Activated CD8-positive, alpha-beta memory T cell treated with anti-CD3 and anti-CD28 coated beads, Interleukin-2, amount 10 ng/mL, durations not matched to agents 7 days and 5 days (primary cell): ENCODE measurements at regions of chr15 and their contacts with region 1.

Region 1: GRCh38 chr15:90931737-90932659 is at the start of gene HDDC3:
- DNase-seq: peak; percentile 95
- ATAC-seq: peak; percentile 52
- H3K4me3 Mint-ChIP-seq: peak within 1 kb of the TSS; percentile 99
- H3K27ac Mint-ChIP-seq: peak within 1 kb of the TSS; percentile 100
- H3K4me1 Mint-ChIP-seq: peaks cover 61% of the 10 kb centered on the region
- H3K27me3 Mint-ChIP-seq: no peaks in the 10 kb centered on the region
- total RNA-seq, gene HDDC3: 33.2 to 39.3 TPM

Region 2: GRCh38 chr15:90648137-90649070 is 283.6 kb before region 1 on chr15:
- CTCF ChIA-PET with region 1: interaction called, 36 read pairs
- DNase-seq: peak; percentile 95
- ATAC-seq: peak; percentile 84
- H3K4me3 Mint-ChIP-seq: peak overlapping the region; percentile 46
- H3K27ac Mint-ChIP-seq: peak overlapping the region; percentile 94
- H3K4me1 Mint-ChIP-seq: peaks cover 35% of the 10 kb centered on the region
- H3K27me3 Mint-ChIP-seq: no peaks in the 10 kb centered on the region

Region 3: DNA sequence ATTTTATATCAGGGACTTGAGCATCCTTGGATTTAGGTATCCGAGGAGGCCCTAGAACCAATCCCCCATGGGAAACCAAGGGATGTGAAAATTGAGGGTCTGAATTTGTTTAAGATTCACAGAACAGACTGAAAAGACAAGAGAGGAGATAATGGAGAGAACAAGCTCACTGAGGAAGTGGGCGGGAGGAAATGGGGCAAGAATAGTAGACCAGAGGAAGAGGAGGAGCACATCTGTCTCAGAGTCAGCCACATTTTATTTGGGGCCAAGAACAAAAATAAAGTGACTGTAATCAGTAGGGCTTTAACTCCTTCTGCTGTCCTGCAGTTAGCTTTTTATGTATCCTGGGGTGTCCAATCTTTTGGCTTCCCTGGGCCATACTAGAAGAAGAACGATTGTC is 151.1 kb before region 1 on chr15:
- CTCF ChIA-PET with region 1: interaction called, 19 read pairs
- DNase-seq: peak; percentile 68
- ATAC-seq: peak; percentile 94
- H3K4me3 Mint-ChIP-seq: peak overlapping the region; percentile 31
- H3K27ac Mint-ChIP-seq: peak overlapping the region; percentile 84
- H3K4me1 Mint-ChIP-seq: peaks cover 35% of the 10 kb centered on the region
- H3K27me3 Mint-ChIP-seq: no peaks in the 10 kb centered on the region

Region 4: DNA sequence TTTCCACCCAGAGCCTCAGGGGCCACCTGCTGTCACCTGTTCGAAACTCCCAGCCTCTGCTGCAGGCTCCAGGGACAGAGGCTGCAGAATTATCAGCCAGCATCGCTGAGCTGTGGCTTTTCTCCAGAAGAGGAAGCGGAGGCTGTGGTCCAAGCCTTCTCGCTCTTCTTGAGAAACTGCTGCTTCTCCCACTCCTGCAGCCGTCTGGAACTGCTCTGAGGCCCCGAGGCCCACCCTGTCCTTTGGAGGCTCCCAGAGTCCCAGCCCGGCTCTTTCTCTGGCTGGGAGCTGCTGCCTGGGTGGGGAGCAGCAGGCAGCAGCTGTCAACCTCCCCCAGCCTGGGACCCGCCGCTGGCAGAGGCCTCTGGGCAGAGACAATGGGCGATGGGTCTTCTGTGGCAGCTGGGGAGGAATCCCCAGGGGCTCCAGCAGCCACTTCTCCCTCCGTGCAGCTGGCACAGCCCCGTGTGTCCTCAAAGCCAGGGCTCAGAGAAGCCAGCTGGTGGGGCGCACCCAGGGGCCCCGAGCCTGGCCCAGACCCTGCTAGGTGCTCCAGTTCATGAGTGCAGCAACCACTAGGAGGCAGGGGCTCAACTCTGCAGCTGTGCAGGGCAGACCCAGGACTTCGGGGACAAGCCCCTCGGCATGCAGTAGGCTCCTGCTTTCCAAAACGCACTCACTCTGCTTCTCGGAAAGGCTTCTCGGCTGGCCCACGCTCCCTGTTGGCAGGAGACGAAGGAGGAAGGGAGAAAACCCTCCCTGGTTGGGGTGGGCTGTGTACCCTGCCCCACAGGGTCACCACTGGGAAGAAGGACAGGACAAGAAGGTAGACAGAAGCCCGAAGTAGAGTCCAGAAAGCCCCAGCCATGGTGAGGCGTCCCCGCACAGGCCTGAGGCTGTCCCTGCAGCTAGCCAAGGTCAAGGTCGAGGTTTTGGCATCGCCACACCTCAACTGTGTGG is 113.5 kb before region 1 on chr15:
- CTCF ChIA-PET with region 1: interaction called, 22 read pairs
- DNase-seq: peak; percentile 65
- ATAC-seq: peak; percentile 23
- H3K4me3 Mint-ChIP-seq: peak overlapping the region; percentile 8
- H3K27ac Mint-ChIP-seq: peak overlapping the region; percentile 96
- H3K4me1 Mint-ChIP-seq: peaks cover 83% of the 10 kb centered on the region
- H3K27me3 Mint-ChIP-seq: no peaks in the 10 kb centered on the region

Region 5: DNA sequence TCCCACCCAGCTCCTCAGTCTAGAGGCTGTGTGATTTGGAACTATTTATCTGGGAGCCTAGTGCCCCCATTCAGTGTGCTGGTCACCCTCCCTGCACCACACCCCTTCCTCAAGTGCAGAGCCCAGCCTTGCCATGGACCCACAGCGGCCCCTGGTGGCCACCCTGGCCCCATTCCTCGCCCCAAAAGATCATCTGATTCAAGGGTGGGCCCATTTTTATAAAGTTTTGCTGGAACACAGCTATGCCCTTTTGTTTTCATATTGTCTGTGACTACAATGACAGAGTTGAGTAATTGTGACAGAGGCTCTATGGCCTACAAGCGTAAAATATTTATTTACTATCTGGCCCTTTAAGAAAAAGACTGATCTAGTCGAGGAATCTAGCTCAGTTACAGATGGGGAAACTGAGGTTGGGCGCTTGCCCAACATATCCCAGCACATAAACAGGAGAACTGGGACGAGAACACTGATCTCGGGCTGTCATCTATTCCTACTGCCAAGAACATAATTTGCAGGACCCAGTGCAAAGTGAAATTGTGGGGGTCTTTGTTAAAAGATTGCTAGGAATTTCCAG is 45.9 kb before region 1 on chr15:
- CTCF ChIA-PET with region 1: interaction called, 64 read pairs
- DNase-seq: peak; percentile 86
- ATAC-seq: peak; percentile 44
- H3K4me3 Mint-ChIP-seq: peak overlapping the region; percentile 62
- H3K27ac Mint-ChIP-seq: peak overlapping the region; percentile 73
- H3K4me1 Mint-ChIP-seq: peaks cover 71% of the 10 kb centered on the region
- H3K27me3 Mint-ChIP-seq: no peaks in the 10 kb centered on the region

Region 6: DNA sequence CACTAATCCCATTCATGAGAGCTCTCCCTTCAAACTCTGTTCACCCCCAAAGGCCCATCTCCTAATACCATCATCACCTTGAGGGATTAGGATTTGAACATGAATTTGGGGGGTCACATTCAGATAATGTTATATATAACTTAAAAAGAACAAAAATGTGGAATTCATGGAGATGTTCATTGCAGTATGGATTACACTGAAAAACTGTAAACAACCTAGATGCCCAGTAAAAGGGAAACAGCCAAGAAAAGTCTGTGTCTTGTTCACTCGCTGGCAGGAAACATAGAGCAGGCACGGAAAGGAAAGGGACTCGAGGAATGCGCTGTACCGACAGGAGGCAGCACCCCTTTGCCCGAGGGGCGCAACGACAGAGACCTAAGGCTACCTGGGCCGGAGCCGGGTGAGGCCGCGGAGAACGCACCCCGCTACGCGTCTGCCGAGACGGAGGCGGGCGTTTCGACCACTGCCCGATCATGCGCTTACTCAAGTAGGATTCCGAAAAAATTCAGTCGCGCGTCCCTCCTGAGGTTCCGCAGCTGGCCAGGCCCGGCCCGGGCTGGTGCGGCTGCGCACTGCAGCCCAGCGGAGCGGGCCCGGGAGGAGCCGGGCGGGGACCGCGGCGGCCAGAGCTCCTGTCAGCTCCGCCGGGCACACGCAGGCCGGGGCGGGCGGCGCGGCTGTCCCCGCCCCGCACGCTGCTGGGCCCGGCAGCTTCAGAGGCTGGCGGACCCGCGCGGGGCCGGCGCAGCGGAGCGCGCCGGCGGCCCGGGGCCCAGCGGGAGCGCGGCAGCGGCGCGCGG is 29.8 kb before region 1 on chr15:
- CTCF ChIA-PET with region 1: interaction called, 181 read pairs
- DNase-seq: peak; percentile 85
- ATAC-seq: peak; percentile 81
- H3K4me3 Mint-ChIP-seq: peak overlapping the region; percentile 87
- H3K27ac Mint-ChIP-seq: peak overlapping the region; percentile 91
- H3K4me1 Mint-ChIP-seq: peaks cover 39% of the 10 kb centered on the region
- H3K27me3 Mint-ChIP-seq: no peaks in the 10 kb centered on the region

Region 7: DNA sequence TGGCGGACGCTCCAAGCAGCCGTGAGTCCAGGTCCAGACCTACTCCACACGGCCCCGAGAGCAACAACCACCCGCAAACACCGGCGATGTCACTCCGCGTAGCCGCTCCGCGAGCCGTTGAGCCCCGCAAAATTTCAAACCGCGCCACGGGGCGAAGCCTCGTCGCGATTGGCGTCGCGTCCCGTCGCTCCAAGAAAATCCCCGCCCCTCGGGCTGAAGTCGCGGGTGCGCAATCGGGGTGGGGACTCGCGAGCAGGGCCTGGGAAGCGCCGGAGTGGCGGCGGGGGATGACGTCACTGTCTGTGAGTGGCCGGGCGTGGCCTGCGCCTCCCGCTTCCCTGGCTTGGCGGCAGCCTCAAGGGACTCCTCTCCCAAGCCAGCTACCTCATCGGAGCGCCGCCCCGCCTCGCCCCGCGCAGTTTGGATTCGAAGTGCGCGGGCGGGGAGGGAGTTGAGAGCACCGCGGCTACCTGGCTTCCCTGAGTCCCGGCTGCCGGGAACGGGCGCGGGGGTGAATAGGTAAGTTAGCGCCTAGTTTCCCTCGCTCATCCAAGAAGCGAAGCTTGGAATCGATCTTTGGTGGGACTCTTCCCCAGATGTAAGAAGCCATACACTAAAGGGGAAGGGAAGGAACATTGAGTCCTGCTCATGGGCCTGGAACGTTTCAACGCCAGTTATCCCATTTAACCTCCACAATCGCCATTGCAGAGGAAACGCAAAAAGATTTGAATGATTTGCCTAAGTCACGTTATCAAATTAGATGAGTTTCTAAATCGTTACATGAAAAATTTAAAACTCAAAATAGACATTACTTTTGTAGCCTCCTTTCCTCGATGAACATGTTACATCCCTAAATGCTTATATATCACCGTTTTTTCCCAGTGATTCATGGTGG is 62.7 kb after region 1 on chr15 and contains the start of gene PRC1:
- CTCF ChIA-PET with region 1: no interaction called
- DNase-seq: peak; percentile 99
- ATAC-seq: peak; percentile 99
- H3K4me3 Mint-ChIP-seq: peak within 1 kb of the TSS; percentile 98
- H3K27ac Mint-ChIP-seq: peak within 1 kb of the TSS; percentile 100
- H3K4me1 Mint-ChIP-seq: peaks cover 34% of the 10 kb centered on the region
- H3K27me3 Mint-ChIP-seq: no peaks in the 10 kb centered on the region
- total RNA-seq, gene PRC1: 152 to 208 TPM

Region 8: GRCh38 chr15:91049378-91050127 is 117.6 kb after region 1 on chr15:
- CTCF ChIA-PET with region 1: interaction called, 10 read pairs
- DNase-seq: peak; percentile 79
- ATAC-seq: peak; percentile 92
- H3K4me3 Mint-ChIP-seq: no peak overlapping the region
- H3K27ac Mint-ChIP-seq: no peak overlapping the region
- H3K4me1 Mint-ChIP-seq: peaks cover 25% of the 10 kb centered on the region
- H3K27me3 Mint-ChIP-seq: peaks cover 40% of the 10 kb centered on the region